Activated naive CD4-positive, alpha-beta T cell treated with anti-CD3 and anti-CD28 coated beads for 36 hours (primary cell): ENCODE measurements at regions of chr12 and their contacts with region 1.

Region 1: GRCh38 chr12:31659087-31659933 is at the start of gene ETFBKMT:
- DNase-seq: peak; percentile 96
- H3K4me3 Mint-ChIP-seq: peak within 1 kb of the TSS; percentile 94
- H3K27ac Mint-ChIP-seq: peak within 1 kb of the TSS; percentile 98
- H3K4me1 Mint-ChIP-seq: peaks cover 11% of the 10 kb centered on the region
- H3K27me3 Mint-ChIP-seq: no peaks in the 10 kb centered on the region
- total RNA-seq, gene ETFBKMT: 0.91 to 1.2 TPM

Region 2: GRCh38 chr12:31629756-31630732 is 29.3 kb before region 1 on chr12:
- CTCF ChIA-PET with region 1: no interaction called
- intact Hi-C with region 1: no loop called
- DNase-seq: no peak
- H3K4me3 Mint-ChIP-seq: no peak overlapping the region
- H3K27ac Mint-ChIP-seq: no peak overlapping the region
- H3K4me1 Mint-ChIP-seq: peaks cover 2% of the 10 kb centered on the region
- H3K27me3 Mint-ChIP-seq: no peaks in the 10 kb centered on the region

Region 3: DNA sequence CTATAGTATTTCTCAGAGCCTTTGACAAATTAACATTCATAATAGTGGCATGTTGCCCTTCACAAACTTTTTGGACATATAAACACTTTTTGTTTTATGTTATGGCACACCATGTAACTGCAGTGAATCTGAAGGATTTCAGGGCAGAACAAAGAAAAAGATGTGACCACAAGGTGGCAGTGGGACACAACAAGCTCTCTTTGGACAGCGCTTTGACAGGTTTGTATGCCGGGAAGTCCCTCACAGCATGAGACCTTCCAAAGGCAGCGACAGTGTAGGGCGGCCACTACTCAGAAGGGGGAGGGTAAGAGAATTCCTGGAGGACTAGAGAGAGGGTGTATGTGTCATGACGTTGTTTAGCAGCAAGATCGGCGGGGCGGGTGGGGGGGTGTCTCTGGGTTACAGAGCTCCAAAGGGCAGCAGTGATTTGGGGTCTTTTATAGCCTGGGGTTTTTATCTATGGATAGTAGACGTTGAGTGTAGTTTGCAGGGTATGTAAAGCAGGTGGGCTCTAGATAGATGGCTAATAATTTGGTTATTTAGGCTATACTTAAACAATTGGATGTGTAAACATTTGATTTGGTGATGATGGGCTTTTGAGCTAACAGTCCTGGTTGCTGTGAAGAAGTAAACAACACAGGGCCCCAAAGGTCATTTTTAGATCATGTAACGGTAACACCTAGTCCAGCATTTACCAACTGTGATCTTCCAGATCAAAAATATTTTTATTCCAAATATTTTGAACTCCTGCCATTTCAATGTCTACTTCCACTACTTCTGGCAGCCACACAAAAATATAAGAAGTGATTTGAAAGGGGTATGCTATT is 23.0 kb after region 1 on chr12:
- CTCF ChIA-PET with region 1: interaction called, 4 read pairs
- intact Hi-C with region 1: loop called (anchors 1 kb)
- DNase-seq: peak; percentile 83
- H3K4me3 Mint-ChIP-seq: no peak overlapping the region
- H3K27ac Mint-ChIP-seq: peak overlapping the region; percentile 84
- H3K4me1 Mint-ChIP-seq: peaks cover 5% of the 10 kb centered on the region
- H3K27me3 Mint-ChIP-seq: no peaks in the 10 kb centered on the region

Region 4: DNA sequence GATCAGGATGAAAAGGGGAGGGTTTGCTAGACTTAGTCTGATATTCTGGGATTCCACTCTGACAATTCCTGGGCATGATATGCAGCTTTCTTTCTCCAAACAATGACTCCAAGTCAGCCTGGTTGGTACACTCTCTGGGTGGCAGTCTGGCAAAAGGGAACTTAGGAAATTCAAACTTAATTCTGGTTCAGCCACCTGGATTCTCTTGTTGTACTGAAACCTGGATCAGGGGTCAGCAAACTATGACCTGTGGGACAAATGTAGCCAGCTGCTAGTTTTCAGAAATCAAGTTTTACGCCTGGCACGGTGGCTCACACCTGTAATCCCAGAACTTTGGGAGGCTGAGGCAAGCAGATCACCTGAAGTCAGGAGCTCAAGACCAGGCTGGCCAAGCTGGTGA is 63.3 kb after region 1 on chr12:
- CTCF ChIA-PET with region 1: no interaction called
- intact Hi-C with region 1: no loop called
- DNase-seq: no peak
- H3K4me3 Mint-ChIP-seq: no peak overlapping the region
- H3K27ac Mint-ChIP-seq: no peak overlapping the region
- H3K4me1 Mint-ChIP-seq: peaks cover 14% of the 10 kb centered on the region
- H3K27me3 Mint-ChIP-seq: no peaks in the 10 kb centered on the region

Region 5: GRCh38 chr12:31736472-31736871 is 77.2 kb after region 1 on chr12:
- CTCF ChIA-PET with region 1: no interaction called
- intact Hi-C with region 1: loop called (anchors 1 kb)
- DNase-seq: peak; percentile 87
- H3K4me3 Mint-ChIP-seq: no peak overlapping the region
- H3K27ac Mint-ChIP-seq: peak overlapping the region; percentile 86
- H3K4me1 Mint-ChIP-seq: peaks cover 57% of the 10 kb centered on the region
- H3K27me3 Mint-ChIP-seq: no peaks in the 10 kb centered on the region

Region 6: GRCh38 chr12:31874961-31875608 is 215.8 kb after region 1 on chr12:
- CTCF ChIA-PET with region 1: no interaction called
- intact Hi-C with region 1: loop called (anchors 1 kb)
- DNase-seq: peak; percentile 90
- H3K4me3 Mint-ChIP-seq: peak overlapping the region; percentile 73
- H3K27ac Mint-ChIP-seq: peak overlapping the region; percentile 100
- H3K4me1 Mint-ChIP-seq: peaks cover 37% of the 10 kb centered on the region
- H3K27me3 Mint-ChIP-seq: no peaks in the 10 kb centered on the region

Region 7: GRCh38 chr12:32139064-32139421 is 479.7 kb after region 1 on chr12:
- CTCF ChIA-PET with region 1: no interaction called
- intact Hi-C with region 1: loop called (anchors 1 kb)
- DNase-seq: peak; percentile 74
- H3K4me3 Mint-ChIP-seq: peak overlapping the region; percentile 71
- H3K27ac Mint-ChIP-seq: no peak overlapping the region
- H3K4me1 Mint-ChIP-seq: peaks cover 24% of the 10 kb centered on the region
- H3K27me3 Mint-ChIP-seq: peaks cover 2% of the 10 kb centered on the region

Region 8: GRCh38 chr12:32399337-32400113 is 740.2 kb after region 1 on chr12 and contains the start of gene FGD4:
- CTCF ChIA-PET with region 1: no interaction called
- intact Hi-C with region 1: loop called (anchors 1 kb)
- DNase-seq: peak; percentile 76
- H3K4me3 Mint-ChIP-seq: peak within 1 kb of the TSS; percentile 88
- H3K27ac Mint-ChIP-seq: no peak within 1 kb of the TSS
- H3K4me1 Mint-ChIP-seq: no peaks in the 10 kb centered on the region
- H3K27me3 Mint-ChIP-seq: peaks cover 38% of the 10 kb centered on the region
- total RNA-seq, gene FGD4: 0.15 to 0.17 TPM

Region 9: DNA sequence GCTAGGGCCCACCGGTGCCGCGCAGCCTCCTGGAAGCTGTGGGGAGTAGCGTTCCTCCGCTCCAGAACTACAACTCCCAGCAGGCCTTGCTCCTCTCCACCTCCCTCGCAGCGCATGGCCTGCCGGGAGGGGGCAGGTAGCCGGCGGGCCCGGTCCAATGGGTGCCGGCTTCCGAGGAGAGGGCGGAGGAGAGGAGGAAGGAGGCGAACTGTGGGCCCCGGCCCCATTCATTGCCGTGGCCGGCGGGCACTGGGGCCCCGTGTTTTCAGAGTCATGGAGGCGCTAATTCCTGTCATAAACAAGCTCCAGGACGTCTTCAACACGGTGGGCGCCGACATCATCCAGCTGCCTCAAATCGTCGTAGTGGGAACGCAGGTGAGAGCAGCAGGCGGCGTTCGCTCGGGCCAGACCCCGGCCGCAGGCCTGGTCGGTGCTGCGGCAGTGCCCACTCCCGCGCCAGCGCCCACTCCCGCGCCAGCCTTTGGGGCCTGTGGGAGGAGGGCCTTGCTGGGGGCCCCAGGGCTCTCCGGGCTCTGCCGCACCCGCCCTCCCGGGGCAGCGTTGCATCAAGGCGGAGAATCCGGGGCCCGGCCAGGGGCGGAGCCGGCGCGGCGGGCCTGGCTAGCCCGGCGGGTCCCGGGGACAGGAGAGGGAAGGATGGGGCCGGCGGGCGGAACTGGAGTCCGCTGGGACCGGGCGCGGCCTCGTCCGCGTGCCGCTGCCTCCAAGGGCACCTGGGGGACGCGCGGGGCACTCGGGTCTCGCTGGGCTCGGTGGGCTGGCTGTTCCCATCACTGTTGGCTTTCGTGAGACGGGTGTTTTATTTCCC is 1020.0 kb after region 1 on chr12 and contains the start of gene DNM1L:
- CTCF ChIA-PET with region 1: no interaction called
- intact Hi-C with region 1: loop called (anchors 1 kb)
- DNase-seq: peak; percentile 94
- H3K4me3 Mint-ChIP-seq: peak within 1 kb of the TSS; percentile 81
- H3K27ac Mint-ChIP-seq: peak within 1 kb of the TSS; percentile 82
- H3K4me1 Mint-ChIP-seq: peaks cover 24% of the 10 kb centered on the region
- H3K27me3 Mint-ChIP-seq: no peaks in the 10 kb centered on the region
- total RNA-seq, gene DNM1L: 54.4 to 61.5 TPM